MCF 10A (cell line): ENCODE measurements at regions of chr10 and their contacts with region 1.

Region 1: DNA sequence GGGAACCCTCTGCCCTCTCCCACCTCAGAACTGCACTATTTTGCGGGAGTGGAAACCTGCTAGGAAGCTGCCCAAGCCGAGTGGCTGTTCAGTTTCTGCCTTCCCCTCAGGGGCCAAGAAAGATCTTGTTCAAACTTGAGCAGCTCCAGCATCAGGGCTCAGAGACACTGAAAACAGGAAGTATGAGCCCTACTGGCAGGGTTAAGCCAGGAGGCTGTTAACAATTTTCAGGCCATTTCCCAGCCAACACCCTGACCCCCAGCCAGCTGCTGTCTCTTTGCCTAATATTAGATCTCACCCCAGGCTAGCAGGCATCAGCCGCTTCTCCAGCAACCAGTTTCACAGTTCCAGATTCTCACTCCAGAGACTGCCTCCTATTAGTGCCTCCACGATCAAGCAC is 9.2 kb downstream of the PLAU start:
- DNase-seq: peak; percentile 91
- H3K4me3 Mint-ChIP-seq: no peak overlapping the region
- H3K27ac Mint-ChIP-seq: peak overlapping the region; percentile 95
- H3K4me1 Mint-ChIP-seq: peaks cover 29% of the 10 kb centered on the region
- H3K27me3 Mint-ChIP-seq: no peaks in the 10 kb centered on the region
- CTCF ChIP-seq: no peak

Region 2: GRCh38 chr10:73609116-73609515 is 311.0 kb before region 1 on chr10:
- CTCF ChIA-PET with region 1: no interaction called
- POLR2A ChIA-PET with region 1: no interaction called
- intact Hi-C with region 1: no loop called
- DNase-seq: no peak
- H3K4me3 Mint-ChIP-seq: no peak overlapping the region
- H3K27ac Mint-ChIP-seq: no peak overlapping the region
- H3K4me1 Mint-ChIP-seq: no peaks in the 10 kb centered on the region
- H3K27me3 Mint-ChIP-seq: no peaks in the 10 kb centered on the region
- CTCF ChIP-seq: no peak

Region 3: DNA sequence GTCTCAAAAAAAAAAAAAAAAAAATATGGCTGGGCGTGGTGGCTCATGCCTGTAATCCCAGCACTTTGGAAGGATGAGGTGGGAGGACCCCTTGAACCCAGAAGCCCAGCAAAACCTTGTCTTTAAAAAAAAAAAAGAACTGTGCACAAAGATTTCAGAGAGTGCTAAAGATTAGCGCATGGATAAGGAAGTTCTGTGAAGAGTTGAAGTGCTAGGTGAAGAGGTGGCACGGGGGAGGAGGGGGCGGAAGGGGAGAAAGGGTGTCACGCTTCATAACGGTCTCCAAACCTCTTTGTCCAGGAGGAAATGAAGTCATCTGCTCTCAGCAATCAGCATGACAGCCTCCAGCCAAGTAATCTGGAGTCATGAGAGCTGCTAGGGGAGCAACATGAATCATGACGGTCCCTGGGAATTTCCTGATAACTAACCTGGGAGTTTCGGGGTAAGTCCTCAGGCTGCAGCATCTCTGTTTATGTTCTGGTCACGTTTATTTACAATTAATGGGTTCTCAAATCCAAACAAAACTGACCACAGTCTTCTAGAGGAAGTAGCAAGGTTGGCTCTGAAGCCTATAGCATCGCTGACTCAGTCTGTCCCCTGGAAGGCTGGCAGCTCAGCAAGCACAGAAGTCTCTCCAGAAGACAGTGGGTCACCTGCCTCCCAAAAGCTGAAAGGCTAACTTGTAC is 11.1 kb before region 1 on chr10:
- CTCF ChIA-PET with region 1: interaction called, 3 read pairs
- POLR2A ChIA-PET with region 1: interaction called, 18 read pairs
- intact Hi-C with region 1: no loop called
- DNase-seq: peak; percentile 97
- H3K4me3 Mint-ChIP-seq: no peak overlapping the region
- H3K27ac Mint-ChIP-seq: peak overlapping the region; percentile 70
- H3K4me1 Mint-ChIP-seq: peaks cover 62% of the 10 kb centered on the region
- H3K27me3 Mint-ChIP-seq: no peaks in the 10 kb centered on the region
- CTCF ChIP-seq: no peak

Region 4: DNA sequence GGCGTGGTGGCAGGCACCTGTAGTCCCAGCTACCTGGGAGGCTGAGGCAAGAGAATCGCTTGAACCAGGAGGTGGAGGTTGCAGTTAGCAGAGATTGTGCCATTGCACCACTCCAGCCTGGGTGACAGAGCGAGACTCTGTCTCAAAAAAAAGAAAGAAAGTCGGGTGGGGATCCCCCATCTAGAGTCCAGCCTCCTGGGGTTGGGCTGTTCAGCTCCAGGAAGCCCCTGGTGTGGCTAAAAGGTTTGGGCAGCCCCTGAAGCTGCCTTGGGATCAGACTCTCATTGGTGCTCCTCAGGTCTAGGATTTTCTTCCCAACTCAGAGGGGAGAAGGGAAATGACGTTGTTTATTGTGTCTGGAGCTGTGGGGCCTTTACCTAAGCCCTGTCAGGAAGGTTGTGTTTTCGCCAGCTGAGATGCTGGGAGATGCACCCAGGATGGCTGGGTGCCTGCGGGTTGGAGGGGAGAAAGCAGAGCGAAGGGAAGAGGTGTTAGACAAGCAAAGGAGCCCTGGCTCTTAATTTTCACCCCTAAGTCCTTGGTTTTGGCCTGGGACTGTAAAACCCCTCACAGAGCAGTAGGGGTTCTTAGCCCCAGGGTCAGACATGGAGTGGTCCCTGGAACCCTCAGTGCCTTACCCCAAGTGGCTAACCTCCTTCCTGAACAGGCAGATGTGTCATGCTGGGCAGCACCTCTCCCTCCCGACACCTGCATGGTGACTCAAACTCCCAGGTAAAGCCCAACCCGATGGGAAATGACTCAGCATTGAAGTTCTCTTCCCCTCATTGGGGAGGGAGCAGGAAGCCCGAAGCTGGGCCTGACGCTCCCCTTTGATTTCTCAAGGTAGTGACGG is 11.9 kb after region 1 on chr10:
- CTCF ChIA-PET with region 1: interaction called, 6 read pairs
- POLR2A ChIA-PET with region 1: interaction called, 26 read pairs
- intact Hi-C with region 1: no loop called
- DNase-seq: peak; percentile 99
- H3K4me3 Mint-ChIP-seq: peak overlapping the region; percentile 4
- H3K27ac Mint-ChIP-seq: peak overlapping the region; percentile 97
- H3K4me1 Mint-ChIP-seq: peaks cover 20% of the 10 kb centered on the region
- H3K27me3 Mint-ChIP-seq: no peaks in the 10 kb centered on the region
- CTCF ChIP-seq: no peak